Psoas muscle (tissue), 8 donors: ENCODE measurements at regions of chr10 and their contacts with region 1.

Region 1: GRCh38 chr10:72466018-72466417 is 111.3 kb upstream of the DNAJB12 start:
- DNase-seq: no peak
- ATAC-seq: no peak
- H3K4me3 ChIP-seq: no peak overlapping the region
- H3K27ac ChIP-seq: no peak overlapping the region
- H3K4me1 ChIP-seq: no peaks in the 10 kb centered on the region
- H3K27me3 ChIP-seq: no peaks in the 10 kb centered on the region
- CTCF ChIP-seq: no peak

Region 2: GRCh38 chr10:72375585-72375984 is 90.4 kb before region 1 on chr10:
- intact Hi-C with region 1: loop called in 1 of 2 experiments (anchors 10 kb)
- DNase-seq: no peak
- ATAC-seq: no peak
- H3K4me3 ChIP-seq: no peak overlapping the region
- H3K27ac ChIP-seq: no peak overlapping the region
- H3K4me1 ChIP-seq: no peaks in the 10 kb centered on the region
- H3K27me3 ChIP-seq: no peaks in the 10 kb centered on the region
- CTCF ChIP-seq: no peak